ENCODE measurements at regions of chr11 and their contacts with region 1.

Region 1: DNA sequence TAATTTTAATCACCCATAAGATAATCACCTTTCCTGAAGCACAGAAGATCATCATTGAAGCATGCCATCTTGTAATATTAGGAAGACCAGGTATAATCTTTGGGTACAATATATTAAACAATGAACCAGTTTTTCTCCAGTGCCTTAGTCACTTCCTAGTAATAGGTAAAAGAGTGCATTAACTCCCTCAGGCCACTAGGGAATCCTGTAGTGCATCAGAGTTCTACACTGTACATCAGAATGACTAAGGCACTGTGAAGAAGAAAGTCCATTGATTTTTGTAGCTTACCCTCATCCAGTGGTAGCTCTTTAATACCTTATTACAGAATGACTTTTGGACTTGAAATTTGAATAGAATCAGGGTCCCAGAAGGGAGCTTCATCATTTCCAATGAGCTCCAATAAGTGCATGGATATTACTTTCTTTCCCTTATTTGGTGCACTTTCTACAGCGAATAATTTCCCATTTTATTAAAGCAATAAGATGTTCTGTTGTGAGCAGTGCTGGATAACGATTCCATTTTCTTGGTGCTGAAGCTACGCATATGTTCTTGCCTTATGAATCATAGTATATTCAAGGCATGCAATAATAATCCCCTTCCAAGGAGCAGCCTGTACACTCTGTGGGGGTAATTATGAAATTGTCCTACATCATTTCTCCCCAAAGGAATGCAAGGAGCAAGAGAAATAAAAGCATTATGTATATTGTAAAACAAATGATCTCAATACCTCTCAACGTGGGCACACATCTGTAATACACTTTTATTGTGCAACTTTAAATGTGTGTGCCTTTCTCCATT is 4.7 kb downstream of the C11orf87 start:
- ATAC-seq: peak in 3 of 8 experiments; percentile 8 to 17 (median 11)
- H3K4me3 ChIP-seq: no peak overlapping the region
- H3K27ac ChIP-seq: no peak overlapping the region
- H3K4me1 ChIP-seq: peaks cover under 1 to 16% of the 10 kb centered on the region in 2 donors

Region 2: DNA sequence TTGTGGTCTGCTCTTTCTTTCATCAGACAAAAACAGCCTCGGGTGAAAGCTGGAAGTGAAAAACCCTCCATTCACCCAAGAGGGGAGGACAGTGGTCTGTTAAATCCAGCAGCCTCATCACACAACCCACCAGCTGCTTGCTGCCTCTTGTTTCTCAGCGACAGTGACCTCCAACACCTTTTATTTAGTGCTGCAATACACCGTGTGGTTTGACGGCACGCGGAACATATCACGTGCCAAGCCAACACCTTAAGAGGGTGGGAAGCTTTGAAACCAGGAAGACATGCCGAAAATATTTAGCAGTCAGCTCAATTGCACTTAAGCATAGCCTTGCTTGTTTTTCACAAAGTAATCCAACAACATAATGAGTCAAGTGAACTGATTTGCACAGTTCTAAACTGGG is 888.6 kb before region 1 on chr11:
- in situ Hi-C with region 1: no loop called
- ATAC-seq: peak in 4 of 8 experiments; percentile 16 to 56 (median 39)
- H3K4me3 ChIP-seq: no peak overlapping the region
- H3K27ac ChIP-seq: no peak overlapping the region
- H3K4me1 ChIP-seq: no peaks in the 10 kb centered on the region

Region 3: GRCh38 chr11:109853156-109853776 is 426.6 kb after region 1 on chr11:
- in situ Hi-C with region 1: no loop called
- ATAC-seq: peak in 4 of 8 experiments; percentile 39 to 61 (median 52)
- H3K4me3 ChIP-seq: no peak overlapping the region
- H3K27ac ChIP-seq: no peak overlapping the region
- H3K4me1 ChIP-seq: peaks cover 0 to 9% of the 10 kb centered on the region in 2 donors

Region 4: GRCh38 chr11:109914809-109915653 is 488.4 kb after region 1 on chr11:
- in situ Hi-C with region 1: loop called in 1 of 9 experiments (anchors 25 kb)
- ATAC-seq: peak in 1 of 8 experiments; percentile 57
- H3K4me3 ChIP-seq: no peak overlapping the region
- H3K27ac ChIP-seq: no peak overlapping the region
- H3K4me1 ChIP-seq: no peaks in the 10 kb centered on the region